Thyroid gland (tissue), 4 donors: ENCODE measurements at regions of chr6 and their contacts with region 1.

Region 1: GRCh38 chr6:155327326-155328073 is 13.2 kb upstream of the TFB1M start:
- DNase-seq: peak; percentile 40 to 57
- H3K4me3 ChIP-seq: no peak overlapping the region
- H3K27ac ChIP-seq: no peak overlapping the region
- H3K4me1 ChIP-seq: no peaks in the 10 kb centered on the region
- H3K27me3 ChIP-seq: no peaks in the 10 kb centered on the region
- CTCF ChIP-seq: peak; percentile 68 to 91 (median 76)
- POLR2A ChIP-seq: no peak

Region 2: DNA sequence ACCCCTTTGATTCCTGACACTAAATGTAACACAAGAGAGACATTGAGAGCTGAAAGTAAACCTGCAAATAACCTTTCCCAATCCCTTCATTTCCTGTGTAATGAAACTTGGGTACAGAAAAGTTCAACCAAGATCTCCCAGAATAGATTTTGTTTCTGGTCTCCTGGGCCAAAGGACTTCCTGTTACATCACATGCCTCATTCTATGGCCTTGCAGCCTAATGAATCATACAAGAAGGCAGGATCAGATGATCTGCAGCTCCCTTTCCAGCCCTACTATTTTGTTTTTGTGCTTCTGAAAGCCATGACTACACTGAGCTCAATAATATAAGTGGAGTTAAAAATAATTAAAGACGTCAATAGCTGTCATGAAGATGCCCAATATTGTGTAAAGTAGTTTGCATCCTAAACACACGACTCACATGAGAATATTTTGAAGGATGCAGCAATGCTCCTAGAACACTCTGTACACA is 201.5 kb after region 1 on chr6:
- intact Hi-C with region 1: loop called (anchors 5 kb)
- DNase-seq: no peak
- H3K4me3 ChIP-seq: no peak overlapping the region
- H3K27ac ChIP-seq: no peak overlapping the region
- H3K4me1 ChIP-seq: no peaks in the 10 kb centered on the region
- H3K27me3 ChIP-seq: no peaks in the 10 kb centered on the region
- CTCF ChIP-seq: no peak
- POLR2A ChIP-seq: no peak

Region 3: DNA sequence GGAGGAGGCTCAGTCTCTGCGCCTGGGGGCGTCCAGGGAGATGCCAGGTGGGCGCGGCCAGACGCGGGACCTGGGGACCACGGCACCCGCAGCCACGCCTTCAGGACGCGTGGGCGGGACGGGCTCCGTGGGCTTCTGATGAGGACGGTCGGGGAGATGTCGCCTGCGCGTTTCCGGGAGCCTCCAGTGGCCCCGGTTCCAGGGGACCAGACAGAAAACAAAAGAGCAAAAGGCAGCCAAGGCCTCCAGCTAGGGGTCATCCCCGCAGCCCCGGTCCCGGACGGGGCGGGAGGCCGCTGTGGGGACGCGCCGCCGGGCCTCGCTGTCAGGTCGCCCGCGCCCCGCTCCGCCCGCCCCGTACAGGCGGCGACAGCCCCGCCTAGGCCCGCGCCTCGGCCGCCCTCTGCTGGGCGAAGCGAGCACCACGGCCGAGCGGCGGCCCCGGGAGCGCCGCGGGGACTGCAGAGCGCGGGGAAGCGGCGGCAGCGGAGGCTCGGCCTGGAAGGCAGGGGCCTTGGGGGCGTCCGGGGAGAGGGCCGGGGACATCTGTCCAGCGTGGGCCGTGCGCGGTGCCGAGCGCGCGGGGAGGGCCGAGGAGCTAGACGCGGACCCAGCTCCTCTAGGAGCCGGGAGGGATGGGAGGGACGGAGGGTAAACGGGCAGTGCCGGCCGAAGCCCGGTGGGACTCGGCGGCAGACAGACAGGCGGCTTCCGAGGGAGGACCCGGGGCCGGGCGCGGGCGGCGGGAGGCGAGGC is 1947.1 kb after region 1 on chr6:
- intact Hi-C with region 1: loop called (anchors 10 kb)
- DNase-seq: peak; percentile 73 to 77
- H3K4me3 ChIP-seq: peak overlapping the region; percentile 29 to 64 (median 37)
- H3K27ac ChIP-seq: peak overlapping the region; percentile 73 to 77 (median 76)
- H3K4me1 ChIP-seq: peaks cover 0 to 8% of the 10 kb centered on the region in 2 donors
- H3K27me3 ChIP-seq: no peaks in the 10 kb centered on the region
- CTCF ChIP-seq: peak in 5 of 6 experiments; percentile 22 to 98 (median 95)
- POLR2A ChIP-seq: peak in 1 of 2 donors; percentile 51